ENCODE measurements at regions of chr1 and their contacts with region 1.

Region 1: DNA sequence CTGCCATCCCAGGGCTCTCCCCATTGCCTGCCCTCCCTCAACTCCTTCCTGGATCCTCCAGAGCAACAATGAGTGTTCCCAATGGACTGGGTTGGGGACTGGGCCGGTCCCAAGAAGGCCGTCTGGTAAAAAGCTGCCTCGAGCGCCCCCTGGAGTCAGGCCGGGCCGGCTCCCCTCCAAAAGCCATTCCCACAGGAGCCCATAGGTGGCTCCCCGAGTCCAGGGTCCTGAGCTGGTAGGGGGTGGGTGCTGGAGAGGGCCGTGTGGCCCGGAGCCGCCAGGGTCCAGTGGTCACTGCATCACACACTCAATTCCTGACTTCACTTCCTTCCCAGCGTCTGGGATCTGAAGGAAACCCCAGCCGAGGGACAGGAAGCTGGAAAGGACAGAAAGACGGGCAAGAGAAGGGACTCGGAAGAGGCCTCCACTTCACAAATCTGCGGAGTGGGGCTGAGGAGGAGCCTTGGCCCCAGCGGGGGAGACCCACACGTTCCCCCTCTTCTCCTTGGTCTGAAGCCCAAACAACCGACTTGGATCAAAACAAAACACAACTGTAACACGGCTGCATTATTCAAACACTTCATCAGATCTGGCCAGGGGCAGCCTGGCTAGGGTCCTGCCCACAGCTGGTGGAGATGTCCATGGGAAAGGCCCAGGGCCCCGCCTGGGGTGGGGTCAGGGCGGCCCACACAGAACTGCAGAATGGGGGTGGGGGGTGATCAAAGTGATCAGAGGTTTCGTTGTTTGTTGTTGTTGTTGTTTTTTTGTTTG is 10.9 kb upstream of the ALDH4A1 start:
- DNase-seq: peak; percentile 94
- ATAC-seq: peak; percentile 95
- H3K4me3 Mint-ChIP-seq: no peak overlapping the region
- H3K27ac Mint-ChIP-seq: no peak overlapping the region
- H3K4me1 Mint-ChIP-seq: peaks cover 5% of the 10 kb centered on the region
- H3K27me3 Mint-ChIP-seq: no peaks in the 10 kb centered on the region
- CTCF ChIP-seq: peak; percentile 94

Region 2: GRCh38 chr1:18743233-18743632 is 170.0 kb before region 1 on chr1:
- CTCF ChIA-PET with region 1: no interaction called
- POLR2A ChIA-PET with region 1: no interaction called
- DNase-seq: peak; percentile 84
- ATAC-seq: peak; percentile 94
- H3K4me3 Mint-ChIP-seq: no peak overlapping the region
- H3K27ac Mint-ChIP-seq: no peak overlapping the region
- H3K4me1 Mint-ChIP-seq: peaks cover 3% of the 10 kb centered on the region; the same call in 1 of the 2 replicates
- H3K27me3 Mint-ChIP-seq: peaks cover 27% of the 10 kb centered on the region
- CTCF ChIP-seq: peak; percentile 37; the same call in 1 of the 2 replicates

Region 3: GRCh38 chr1:18890711-18891425 is 22.4 kb before region 1 on chr1:
- CTCF ChIA-PET with region 1: interaction called, 41 read pairs
- POLR2A ChIA-PET with region 1: no interaction called
- DNase-seq: no peak
- ATAC-seq: no peak
- H3K4me3 Mint-ChIP-seq: no peak overlapping the region
- H3K27ac Mint-ChIP-seq: no peak overlapping the region
- H3K4me1 Mint-ChIP-seq: no peaks in the 10 kb centered on the region
- H3K27me3 Mint-ChIP-seq: no peaks in the 10 kb centered on the region
- CTCF ChIP-seq: no peak

Region 4: DNA sequence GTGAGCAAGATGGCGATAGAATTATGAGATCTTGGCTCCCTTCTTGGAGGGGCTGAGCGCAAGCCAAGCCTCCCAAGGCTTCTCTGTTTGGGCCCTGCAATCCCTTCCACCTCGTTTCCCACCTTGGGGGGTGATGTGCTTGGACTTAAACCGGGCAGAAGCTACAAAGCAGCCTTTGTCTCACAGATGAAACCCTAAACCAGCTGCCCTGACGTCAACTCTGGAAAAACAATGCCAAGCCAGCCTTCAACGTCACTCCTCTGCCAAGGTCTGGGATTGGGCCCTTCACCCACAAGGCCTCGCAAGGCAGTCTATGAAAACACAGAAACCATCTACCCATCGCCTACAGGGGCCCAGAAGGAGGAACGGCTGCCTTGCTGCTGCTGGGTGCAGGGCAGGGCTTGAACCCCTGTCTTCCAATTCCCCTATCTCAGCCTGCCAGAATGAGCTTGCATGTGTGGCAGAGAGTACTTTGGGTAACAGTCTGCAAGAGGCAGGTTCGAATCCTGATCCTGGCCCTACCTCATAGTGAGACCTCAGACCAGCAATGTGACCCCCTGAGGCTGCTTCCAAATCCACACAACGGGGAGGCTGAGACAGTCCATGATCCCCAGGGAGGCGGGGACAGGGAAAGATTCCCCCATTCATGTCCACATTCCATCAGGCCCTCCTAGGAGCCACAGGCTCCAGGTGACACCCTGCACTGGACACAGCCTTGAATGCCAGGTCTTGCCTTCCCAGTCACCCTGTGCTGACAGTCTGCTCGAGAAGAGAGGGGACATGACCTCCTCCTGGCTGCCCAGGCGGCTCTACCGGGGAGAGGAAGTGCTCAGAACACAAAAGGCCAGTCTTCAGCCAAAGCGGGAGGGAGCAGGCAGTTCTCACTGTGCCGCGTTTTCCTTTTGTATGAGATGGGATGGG is 28.2 kb after region 1 on chr1:
- CTCF ChIA-PET with region 1: interaction called, 107 read pairs
- POLR2A ChIA-PET with region 1: interaction called, 3 read pairs
- DNase-seq: no peak
- ATAC-seq: peak; percentile 36
- H3K4me3 Mint-ChIP-seq: peak overlapping the region; percentile 4; the same call in 1 of the 2 replicates
- H3K27ac Mint-ChIP-seq: peak overlapping the region; percentile 73
- H3K4me1 Mint-ChIP-seq: peaks cover 50% of the 10 kb centered on the region
- H3K27me3 Mint-ChIP-seq: no peaks in the 10 kb centered on the region
- CTCF ChIP-seq: no peak

Region 5: DNA sequence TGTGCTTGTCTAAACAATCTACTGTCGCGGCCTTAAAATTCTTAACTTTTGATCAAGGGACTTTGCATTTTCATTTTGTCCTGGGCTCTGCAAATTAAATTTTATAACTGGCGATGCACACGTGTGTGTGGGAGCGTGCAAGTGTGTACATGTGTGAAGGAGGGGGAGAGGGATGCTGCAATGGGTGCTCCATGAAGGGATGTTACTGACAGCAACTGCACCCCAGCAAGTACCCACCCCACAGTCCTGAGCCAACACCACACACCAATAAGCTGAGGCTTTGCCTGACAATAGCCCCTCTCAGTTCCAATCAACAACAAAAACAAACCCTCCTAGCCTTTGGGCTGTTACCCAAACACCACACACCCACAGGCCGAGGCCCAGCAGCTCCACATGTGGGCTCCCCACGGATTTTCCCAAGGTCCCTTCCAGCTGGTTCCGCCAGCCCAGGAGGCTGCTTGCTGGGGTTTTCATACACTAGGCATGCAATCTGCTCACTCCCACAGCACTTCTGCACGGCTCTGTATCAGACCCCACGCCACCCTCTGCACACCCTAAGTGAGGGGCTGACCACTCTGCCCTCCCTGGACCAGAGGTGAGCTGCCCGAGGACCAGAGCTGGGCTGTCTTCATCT is 76.0 kb after region 1 on chr1:
- CTCF ChIA-PET with region 1: interaction called, 12 read pairs
- POLR2A ChIA-PET with region 1: no interaction called
- DNase-seq: no peak
- ATAC-seq: peak; percentile 84
- H3K4me3 Mint-ChIP-seq: no peak overlapping the region
- H3K27ac Mint-ChIP-seq: no peak overlapping the region
- H3K4me1 Mint-ChIP-seq: peaks cover 10% of the 10 kb centered on the region; the same call in 1 of the 2 replicates
- H3K27me3 Mint-ChIP-seq: peaks cover 7% of the 10 kb centered on the region; the same call in 1 of the 2 replicates
- CTCF ChIP-seq: no peak

Region 6: GRCh38 chr1:19044975-19045831 is 132.0 kb after region 1 on chr1:
- CTCF ChIA-PET with region 1: interaction called, 36 read pairs
- POLR2A ChIA-PET with region 1: no interaction called
- DNase-seq: no peak
- ATAC-seq: no peak
- H3K4me3 Mint-ChIP-seq: no peak overlapping the region
- H3K27ac Mint-ChIP-seq: no peak overlapping the region
- H3K4me1 Mint-ChIP-seq: peaks cover 10% of the 10 kb centered on the region
- H3K27me3 Mint-ChIP-seq: no peaks in the 10 kb centered on the region
- CTCF ChIP-seq: no peak

Measured in WTC11 (cell line).